ENCODE measurements at regions of chr3 and their contacts with region 1.

Region 1: GRCh38 chr3:73086071-73086494 is 24.6 kb downstream of the EBLN2 start:
- DNase-seq: peak in 1 of 2 donors; percentile 16
- ATAC-seq: peak; percentile 61 to 64
- H3K4me3 ChIP-seq: no peak overlapping the region
- H3K27ac ChIP-seq: no peak overlapping the region
- H3K4me1 ChIP-seq: peaks cover 0 to 3% of the 10 kb centered on the region in 2 donors
- H3K27me3 ChIP-seq: no peaks in the 10 kb centered on the region
- CTCF ChIP-seq: peak; percentile 67 to 79 (median 76)
- POLR2A ChIP-seq: no peak

Region 2: DNA sequence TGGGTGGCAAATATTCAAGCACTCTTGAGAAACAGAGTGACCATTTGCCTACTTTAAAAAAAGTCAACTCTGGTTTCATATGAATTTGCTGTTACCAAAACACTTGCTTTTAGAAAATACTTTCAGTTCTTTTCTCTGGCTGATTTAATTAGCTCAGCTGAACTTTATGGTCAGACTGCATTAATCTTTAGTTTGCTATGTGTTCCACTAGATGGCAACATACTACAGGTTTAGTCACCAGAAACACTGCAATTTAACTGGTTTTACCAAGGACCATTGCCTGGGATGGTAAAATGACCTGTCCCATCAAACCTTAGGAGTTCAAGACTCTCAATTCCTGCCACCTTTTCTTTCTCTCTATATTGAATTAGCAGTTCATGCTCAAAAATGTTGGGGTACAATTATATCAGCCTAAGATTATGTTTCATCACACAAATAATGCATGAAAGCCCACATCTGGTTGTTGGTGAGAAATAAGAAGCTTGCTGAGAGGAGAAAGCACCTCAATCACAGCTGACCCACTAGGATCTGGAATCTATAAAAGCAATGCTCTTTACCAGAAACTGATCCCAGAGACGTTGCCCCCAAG is 1375.1 kb before region 1 on chr3:
- in situ Hi-C with region 1: loop called in 2 of 4 experiments (anchors 25 kb)
- intact Hi-C with region 1: no loop called
- DNase-seq: no peak
- ATAC-seq: peak in 1 of 2 donors; percentile 62
- H3K4me3 ChIP-seq: no peak overlapping the region
- H3K27ac ChIP-seq: no peak overlapping the region
- H3K4me1 ChIP-seq: peaks cover 11 to 21% of the 10 kb centered on the region in 2 donors
- H3K27me3 ChIP-seq: no peaks in the 10 kb centered on the region
- CTCF ChIP-seq: peak; percentile 23 to 63 (median 51)
- POLR2A ChIP-seq: no peak

Region 3: DNA sequence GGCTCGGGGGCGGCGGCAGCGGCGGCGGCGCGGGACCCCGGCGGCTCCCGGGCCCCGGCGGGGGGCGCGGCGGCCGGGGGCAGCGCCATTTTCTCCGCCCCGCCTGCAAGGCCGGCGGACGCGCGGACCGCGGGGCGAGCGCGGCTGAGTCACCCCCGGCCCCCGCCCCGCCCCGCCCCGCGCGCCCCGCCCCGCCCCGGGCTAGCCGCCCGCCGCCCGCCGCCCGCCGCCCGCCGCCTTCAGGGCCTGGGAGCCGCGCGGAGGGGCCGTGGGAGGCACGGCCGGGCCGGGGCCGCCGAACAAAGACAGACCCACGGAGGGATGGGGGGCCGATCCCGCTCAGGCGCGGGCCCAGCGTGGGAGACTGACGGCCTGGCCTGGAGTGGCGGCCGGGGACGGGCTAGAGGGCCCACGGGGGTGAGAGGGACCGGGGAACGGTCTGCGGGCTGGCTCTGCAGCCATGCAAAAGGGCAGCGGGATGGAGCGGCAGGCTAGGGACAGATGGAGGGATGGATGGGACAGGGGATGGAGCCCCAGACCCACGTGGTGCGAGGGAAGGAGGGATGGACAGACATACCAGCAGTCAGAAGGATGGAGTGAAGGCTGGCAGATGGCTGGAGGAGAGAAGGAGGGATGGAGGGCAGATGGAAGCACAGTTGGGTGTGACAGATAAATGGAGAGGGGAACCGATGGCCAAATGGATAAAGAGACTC is 1360.6 kb before region 1 on chr3 and contains the start of gene EIF4E3:
- in situ Hi-C with region 1: loop called (anchors 25 kb)
- intact Hi-C with region 1: no loop called
- DNase-seq: peak in 1 of 2 donors; percentile 21
- ATAC-seq: peak; percentile 81 to 82
- H3K4me3 ChIP-seq: peak within 1 kb of the TSS; percentile 67 to 84 (median 78)
- H3K27ac ChIP-seq: peak within 1 kb of the TSS; percentile 76 to 87 (median 85)
- H3K4me1 ChIP-seq: peaks cover 21 to 26% of the 10 kb centered on the region in 2 donors
- H3K27me3 ChIP-seq: no peaks in the 10 kb centered on the region
- CTCF ChIP-seq: no peak
- POLR2A ChIP-seq: no peak
- total RNA-seq, gene EIF4E3: 25.0 to 51.0 (median 42.8) TPM

Region 4: GRCh38 chr3:71875461-71875947 is 1210.6 kb before region 1 on chr3:
- in situ Hi-C with region 1: loop called in 2 of 4 experiments (anchors 25 kb)
- intact Hi-C with region 1: loop called (anchors 10 kb)
- DNase-seq: peak; percentile 30 to 48
- ATAC-seq: peak; percentile 68 to 86
- H3K4me3 ChIP-seq: no peak overlapping the region
- H3K27ac ChIP-seq: no peak overlapping the region
- H3K4me1 ChIP-seq: no peaks in the 10 kb centered on the region
- H3K27me3 ChIP-seq: no peaks in the 10 kb centered on the region
- CTCF ChIP-seq: peak; percentile 58 to 81 (median 67)
- POLR2A ChIP-seq: no peak

Region 5: DNA sequence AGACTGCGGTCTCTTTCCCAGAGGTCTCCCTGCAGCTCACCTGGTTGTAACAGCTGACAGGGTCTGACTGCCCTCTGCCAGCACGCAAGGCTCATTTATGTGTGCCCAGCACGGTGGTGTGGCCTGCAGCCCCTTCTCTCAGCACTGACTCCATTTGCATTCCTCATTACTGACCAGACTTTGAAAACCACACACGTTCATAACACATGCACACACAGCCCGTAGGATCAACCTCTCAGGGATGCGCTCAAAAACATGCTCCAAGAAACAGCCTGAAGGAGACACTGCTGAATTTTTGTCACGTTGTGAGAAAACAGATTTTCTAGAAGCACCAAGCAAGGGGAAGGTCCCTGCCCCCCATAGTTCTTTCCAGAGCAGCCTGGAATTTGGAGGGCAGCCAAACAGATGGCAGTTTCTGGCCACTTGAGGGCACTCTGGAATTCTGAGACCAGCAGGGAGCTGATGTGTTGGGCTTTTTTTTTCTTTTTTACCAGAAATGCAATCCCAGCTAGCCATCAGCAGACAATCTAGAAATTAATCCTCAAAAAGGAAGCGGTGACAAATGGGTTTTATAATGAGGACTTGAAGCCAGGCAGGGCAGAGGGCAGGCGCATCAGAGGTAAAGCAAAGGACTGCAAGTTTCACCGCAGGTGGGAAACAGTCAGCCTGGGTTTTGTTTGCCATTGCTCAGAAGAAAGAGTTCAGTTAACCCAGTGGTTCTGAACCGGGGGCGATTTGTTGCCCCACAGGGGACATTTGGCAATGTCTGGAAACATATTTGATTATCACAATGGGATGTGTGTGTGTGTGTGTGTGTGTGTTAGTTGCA is 1130.6 kb before region 1 on chr3:
- in situ Hi-C with region 1: loop called in 1 of 4 experiments (anchors 25 kb)
- intact Hi-C with region 1: loop called (anchors 5 kb)
- DNase-seq: peak; percentile 43 to 54
- ATAC-seq: peak; percentile 62 to 65
- H3K4me3 ChIP-seq: no peak overlapping the region
- H3K27ac ChIP-seq: no peak overlapping the region
- H3K4me1 ChIP-seq: peaks cover 0 to 6% of the 10 kb centered on the region in 2 donors
- H3K27me3 ChIP-seq: no peaks in the 10 kb centered on the region
- CTCF ChIP-seq: peak; percentile 59 to 79 (median 67)
- POLR2A ChIP-seq: no peak

Region 6: DNA sequence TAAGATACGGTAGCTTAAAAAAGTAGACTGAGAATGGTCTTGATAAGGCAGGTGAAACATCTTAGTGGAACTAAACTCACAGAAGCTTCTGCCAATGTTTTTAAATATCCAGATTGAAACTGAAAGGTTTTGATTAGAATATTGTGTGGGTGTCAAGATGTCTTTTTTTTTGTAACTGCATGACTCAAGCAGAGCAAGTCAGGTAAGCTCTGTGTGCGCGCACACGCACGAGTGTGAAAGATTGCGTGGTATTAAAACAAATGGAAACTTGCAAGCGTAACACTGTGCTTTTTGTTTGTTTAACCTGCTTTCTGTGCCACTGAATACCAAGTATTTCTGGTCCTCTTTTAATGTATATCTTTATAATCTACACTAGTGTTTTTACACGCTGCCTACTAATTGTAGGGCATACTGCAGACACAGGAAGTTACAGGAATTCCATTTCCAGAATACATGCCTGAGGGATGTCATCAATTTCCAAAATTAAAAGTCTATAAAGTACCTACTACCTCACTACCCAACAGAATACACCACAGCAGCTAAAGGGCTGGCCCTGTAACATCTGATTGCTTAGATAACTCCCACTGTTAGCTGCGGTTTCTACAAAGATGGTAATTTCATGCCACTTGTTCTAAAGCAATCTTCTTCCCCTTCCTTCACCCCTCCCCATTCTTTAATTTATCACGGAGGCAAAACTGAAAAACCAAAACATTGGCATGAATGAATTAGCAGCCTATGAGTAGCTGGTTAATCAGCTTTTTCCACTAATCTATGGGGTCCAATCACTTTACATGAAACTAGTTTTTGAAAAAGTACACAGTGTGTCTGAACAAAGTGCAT is 710.6 kb before region 1 on chr3:
- in situ Hi-C with region 1: no loop called
- intact Hi-C with region 1: no loop called
- DNase-seq: no peak
- ATAC-seq: no peak
- H3K4me3 ChIP-seq: no peak overlapping the region
- H3K27ac ChIP-seq: no peak overlapping the region
- H3K4me1 ChIP-seq: peaks cover 0 to 18% of the 10 kb centered on the region in 2 donors
- H3K27me3 ChIP-seq: no peaks in the 10 kb centered on the region
- CTCF ChIP-seq: no peak
- POLR2A ChIP-seq: no peak

Region 7: DNA sequence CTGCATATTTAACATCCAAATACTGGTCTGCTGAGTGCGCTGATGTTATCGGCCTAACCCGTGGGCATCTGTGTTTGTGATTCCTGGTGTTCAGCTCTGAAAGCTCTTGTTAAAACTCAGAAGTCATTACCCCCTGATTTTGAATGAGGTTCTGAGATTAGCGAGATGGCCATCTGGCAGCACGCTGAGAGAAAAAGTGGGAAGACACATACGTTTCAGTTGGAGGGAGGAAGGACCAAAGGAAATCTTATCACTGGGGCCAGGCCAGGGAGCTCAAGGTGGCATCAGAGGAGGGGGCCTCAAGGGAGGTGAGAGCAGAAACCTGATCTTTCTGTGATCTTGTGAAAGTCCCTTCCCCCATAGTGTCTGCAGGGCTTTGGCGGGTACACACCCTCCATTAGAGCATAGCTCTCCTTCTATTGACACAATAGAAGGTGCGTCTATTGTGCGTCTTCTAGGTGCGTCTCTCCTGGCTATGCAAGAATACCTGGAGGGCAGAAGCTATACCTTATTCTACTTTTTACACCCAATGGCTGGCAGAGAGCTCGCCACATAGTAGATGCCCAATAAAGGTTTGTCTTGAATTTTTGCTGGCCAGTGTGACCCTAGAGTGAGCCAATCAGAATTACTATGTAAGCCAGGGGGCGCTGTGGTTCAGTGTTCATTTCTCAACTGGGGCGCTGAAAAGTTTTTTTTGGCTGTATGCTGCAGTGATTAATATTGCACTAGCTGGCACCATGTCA is 420.2 kb before region 1 on chr3:
- in situ Hi-C with region 1: loop called in 1 of 4 experiments (anchors 25 kb)
- intact Hi-C with region 1: loop called (anchors 10 kb)
- DNase-seq: no peak
- ATAC-seq: no peak
- H3K4me3 ChIP-seq: no peak overlapping the region
- H3K27ac ChIP-seq: no peak overlapping the region
- H3K4me1 ChIP-seq: no peaks in the 10 kb centered on the region
- H3K27me3 ChIP-seq: no peaks in the 10 kb centered on the region
- CTCF ChIP-seq: peak in 3 of 5 experiments; percentile 25 to 50 (median 36)
- POLR2A ChIP-seq: no peak

Region 8: DNA sequence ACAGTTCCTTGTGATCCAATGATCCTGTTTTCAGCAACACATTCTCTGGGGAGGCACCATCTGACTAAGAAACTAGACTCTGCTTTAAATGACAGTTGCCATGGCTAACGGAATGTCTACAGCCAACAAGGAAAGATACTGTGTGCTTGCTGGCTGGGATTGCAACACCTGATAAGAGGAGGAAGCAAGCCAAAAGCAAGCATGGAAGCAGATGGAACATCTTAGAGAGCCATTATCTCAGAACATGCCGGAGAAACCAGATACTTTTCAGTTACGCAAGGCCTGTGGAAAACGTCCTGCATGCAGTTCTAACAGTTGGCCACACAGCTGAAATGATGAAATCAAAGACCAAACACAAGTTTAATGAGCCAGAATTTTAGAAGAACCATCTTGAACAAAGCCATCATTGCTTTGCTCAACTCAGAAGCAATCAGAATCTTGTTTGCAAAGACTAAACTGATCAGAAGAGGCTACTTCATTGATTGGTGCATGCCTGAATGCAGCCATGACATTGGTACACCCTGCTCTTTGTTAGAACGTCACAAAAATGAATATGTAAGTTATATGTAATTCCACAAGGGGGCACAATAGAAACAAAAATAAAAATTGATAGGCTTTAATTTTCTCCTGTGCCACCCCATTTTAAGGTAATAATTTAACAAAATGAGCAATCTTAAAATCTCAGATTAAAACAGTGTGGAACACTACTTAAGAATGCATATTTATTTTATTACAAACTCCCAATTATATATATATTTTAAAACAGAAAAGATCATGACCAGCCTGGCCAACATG is 147.4 kb before region 1 on chr3:
- in situ Hi-C with region 1: no loop called
- intact Hi-C with region 1: loop called (anchors 10 kb)
- DNase-seq: peak; percentile 79
- ATAC-seq: peak; percentile 99 to 100
- H3K4me3 ChIP-seq: no peak overlapping the region
- H3K27ac ChIP-seq: peak overlapping the region; percentile 35 to 73 (median 54)
- H3K4me1 ChIP-seq: peaks cover 10 to 11% of the 10 kb centered on the region in 2 donors
- H3K27me3 ChIP-seq: no peaks in the 10 kb centered on the region
- CTCF ChIP-seq: peak; percentile 59 to 95 (median 71)
- POLR2A ChIP-seq: no peak

Region 9: GRCh38 chr3:73332558-73332957 is 246.5 kb after region 1 on chr3:
- in situ Hi-C with region 1: no loop called
- intact Hi-C with region 1: no loop called
- DNase-seq: no peak
- ATAC-seq: no peak
- H3K4me3 ChIP-seq: no peak overlapping the region
- H3K27ac ChIP-seq: no peak overlapping the region
- H3K4me1 ChIP-seq: no peaks in the 10 kb centered on the region
- H3K27me3 ChIP-seq: no peaks in the 10 kb centered on the region
- CTCF ChIP-seq: no peak
- POLR2A ChIP-seq: no peak

Measured in gastrocnemius medialis (tissue), 4 donors.